Activated naive CD4-positive, alpha-beta T cell treated with anti-CD3 and anti-CD28 coated beads for 36 hours (primary cell): ENCODE measurements at regions of chr22 and their contacts with region 1.

Region 1: DNA sequence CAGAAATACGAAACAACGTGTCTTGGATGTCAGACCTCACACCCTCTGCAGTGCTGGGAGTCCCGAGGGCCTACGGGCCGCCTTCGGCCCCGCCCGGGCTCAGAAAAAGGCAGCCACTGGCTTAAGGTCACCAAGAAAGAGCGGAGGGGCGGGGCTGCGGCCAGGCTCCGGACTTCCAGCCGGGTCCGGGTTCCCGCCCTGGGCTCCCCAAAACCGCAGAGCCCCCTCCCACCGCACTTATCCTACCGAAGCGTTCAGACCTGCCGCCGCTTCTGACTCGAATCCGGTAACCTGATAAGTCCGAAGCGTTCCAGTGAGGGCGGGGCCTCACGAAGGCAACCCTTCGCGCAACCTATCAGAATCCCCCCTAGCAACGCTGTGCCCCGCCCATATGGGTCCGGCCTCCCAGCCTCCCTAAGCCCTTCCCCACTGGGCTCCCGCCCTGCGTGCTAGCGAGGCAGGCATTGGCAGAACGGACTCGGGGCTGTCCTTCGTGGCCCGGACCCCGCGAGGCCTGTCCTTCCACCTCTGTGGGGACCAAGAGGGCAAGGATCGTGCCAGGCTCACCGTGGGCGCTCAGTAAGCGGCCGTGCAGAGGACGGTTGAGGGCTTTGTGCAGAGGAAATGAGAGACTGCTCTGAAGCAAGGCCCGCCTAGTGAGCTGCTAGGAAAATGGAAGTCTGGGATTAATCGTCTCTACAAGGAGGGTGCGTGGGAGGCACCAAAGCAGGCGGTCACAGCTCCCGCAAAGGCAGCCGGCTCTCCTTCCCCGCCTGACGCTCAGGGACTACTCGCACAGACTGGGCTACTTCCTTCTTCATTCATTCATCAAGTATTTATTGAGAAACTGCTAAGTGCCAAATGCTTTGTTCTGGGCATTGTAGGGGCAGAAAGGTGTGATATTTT is at the start of gene NAGA:
- DNase-seq: peak; percentile 96
- H3K4me3 Mint-ChIP-seq: peak within 1 kb of the TSS; percentile 87
- H3K27ac Mint-ChIP-seq: peak within 1 kb of the TSS; percentile 88
- H3K4me1 Mint-ChIP-seq: peaks cover 34% of the 10 kb centered on the region
- H3K27me3 Mint-ChIP-seq: no peaks in the 10 kb centered on the region
- total RNA-seq, gene NAGA: 14.6 to 15.9 TPM

Region 2: GRCh38 chr22:41688365-41689211 is 382.2 kb before region 1 on chr22 and contains the start of gene SNU13:
- CTCF ChIA-PET with region 1: no interaction called
- intact Hi-C with region 1: loop called (anchors 5 kb)
- DNase-seq: peak; percentile 96
- H3K4me3 Mint-ChIP-seq: peak within 1 kb of the TSS; percentile 97
- H3K27ac Mint-ChIP-seq: peak within 1 kb of the TSS; percentile 97
- H3K4me1 Mint-ChIP-seq: peaks cover 39% of the 10 kb centered on the region
- H3K27me3 Mint-ChIP-seq: no peaks in the 10 kb centered on the region
- total RNA-seq, gene SNU13: 265 to 277 TPM

Region 3: GRCh38 chr22:41822317-41823060 is 248.3 kb before region 1 on chr22:
- CTCF ChIA-PET with region 1: no interaction called
- intact Hi-C with region 1: loop called (anchors 5 kb)
- DNase-seq: peak; percentile 65
- H3K4me3 Mint-ChIP-seq: no peak overlapping the region
- H3K27ac Mint-ChIP-seq: peak overlapping the region; percentile 81
- H3K4me1 Mint-ChIP-seq: peaks cover 33% of the 10 kb centered on the region
- H3K27me3 Mint-ChIP-seq: no peaks in the 10 kb centered on the region

Region 4: GRCh38 chr22:41998361-41999275 is 72.2 kb before region 1 on chr22 and contains the start of gene WBP2NL:
- CTCF ChIA-PET with region 1: no interaction called
- intact Hi-C with region 1: loop called (anchors 1 kb)
- DNase-seq: peak; percentile 91
- H3K4me3 Mint-ChIP-seq: peak within 1 kb of the TSS; percentile 83
- H3K27ac Mint-ChIP-seq: peak within 1 kb of the TSS; percentile 81
- H3K4me1 Mint-ChIP-seq: peaks cover 15% of the 10 kb centered on the region
- H3K27me3 Mint-ChIP-seq: no peaks in the 10 kb centered on the region
- total RNA-seq, gene WBP2NL: 0.50 to 0.74 TPM

Region 5: DNA sequence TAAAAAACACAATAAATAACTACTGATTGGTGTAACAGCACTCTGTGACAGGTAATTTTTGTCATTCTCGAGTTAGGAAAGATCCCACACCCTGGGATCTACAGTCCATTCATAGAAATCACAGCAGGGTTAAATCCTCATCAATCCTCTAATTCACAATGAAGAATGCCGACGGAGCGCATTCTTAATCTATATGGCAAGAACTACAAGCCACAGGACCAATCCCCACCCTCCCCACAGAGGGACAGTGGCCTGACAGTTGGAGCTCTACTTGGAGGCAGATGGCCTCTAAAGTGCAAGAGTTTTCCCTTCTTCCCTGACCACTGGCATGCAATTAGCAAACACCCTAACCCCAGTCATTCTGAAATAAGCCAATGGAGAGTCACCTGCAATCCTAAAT is 165.5 kb after region 1 on chr22:
- CTCF ChIA-PET with region 1: no interaction called
- intact Hi-C with region 1: no loop called
- DNase-seq: no peak
- H3K4me3 Mint-ChIP-seq: no peak overlapping the region
- H3K27ac Mint-ChIP-seq: no peak overlapping the region
- H3K4me1 Mint-ChIP-seq: peaks cover 46% of the 10 kb centered on the region
- H3K27me3 Mint-ChIP-seq: no peaks in the 10 kb centered on the region

Region 6: GRCh38 chr22:42444077-42444904 is 373.5 kb after region 1 on chr22:
- CTCF ChIA-PET with region 1: interaction called, 4 read pairs
- intact Hi-C with region 1: loop called (anchors 5 kb)
- DNase-seq: peak; percentile 92
- H3K4me3 Mint-ChIP-seq: peak overlapping the region; percentile 71
- H3K27ac Mint-ChIP-seq: peak overlapping the region; percentile 87
- H3K4me1 Mint-ChIP-seq: peaks cover 32% of the 10 kb centered on the region
- H3K27me3 Mint-ChIP-seq: no peaks in the 10 kb centered on the region